Heart right ventricle (tissue), 16 donors: ENCODE measurements at regions of chr11 and their contacts with region 1.

Region 1: GRCh38 chr11:63871962-63872799 is 33.3 kb downstream of the MARK2 start:
- DNase-seq: peak; percentile 55 to 89
- ATAC-seq: peak; percentile 92 to 97 (median 96)
- H3K4me3 ChIP-seq: peak overlapping the region in 4 of 10 donors; percentile 5 to 27 (median 12)
- H3K27ac ChIP-seq: peak overlapping the region; percentile 25 to 90 (median 79)
- H3K4me1 ChIP-seq: peaks cover 35 to 97% (median 88%) of the 10 kb centered on the region in 9 donors
- H3K27me3 ChIP-seq: no peaks in the 10 kb centered on the region
- CTCF ChIP-seq: peak in 8 of 9 donors; percentile 30 to 78 (median 56)

Region 2: GRCh38 chr11:63762654-63763495 is 109.3 kb before region 1 on chr11:
- intact Hi-C with region 1: no loop called
- DNase-seq: peak; percentile 35 to 52
- ATAC-seq: peak; percentile 44 to 65 (median 58)
- H3K4me3 ChIP-seq: peak overlapping the region; percentile 26 to 67 (median 54)
- H3K27ac ChIP-seq: peak overlapping the region in 9 of 10 donors; percentile 50 to 74 (median 69)
- H3K4me1 ChIP-seq: peaks cover 10 to 48% (median 22%) of the 10 kb centered on the region in 9 donors
- H3K27me3 ChIP-seq: no peaks in the 10 kb centered on the region
- CTCF ChIP-seq: peak in 5 of 9 donors; percentile 7 to 47 (median 27)

Region 3: GRCh38 chr11:63938479-63939396 is 66.6 kb after region 1 on chr11 and contains the start of gene NAA40:
- intact Hi-C with region 1: loop called in 1 of 10 experiments (anchors 2 kb)
- DNase-seq: peak; percentile 86 to 91
- ATAC-seq: peak; percentile 93 to 96 (median 95)
- H3K4me3 ChIP-seq: peak within 1 kb of the TSS; percentile 53 to 92 (median 72)
- H3K27ac ChIP-seq: peak within 1 kb of the TSS; percentile 49 to 83 (median 75)
- H3K4me1 ChIP-seq: peaks cover 0 to 38% (median 23%) of the 10 kb centered on the region in 9 donors
- H3K27me3 ChIP-seq: no peaks in the 10 kb centered on the region
- CTCF ChIP-seq: peak in 5 of 9 donors; percentile 6 to 26 (median 12)
- total RNA-seq, gene NAA40: 13.0 to 26.4 (median 19.7) TPM

Region 4: DNA sequence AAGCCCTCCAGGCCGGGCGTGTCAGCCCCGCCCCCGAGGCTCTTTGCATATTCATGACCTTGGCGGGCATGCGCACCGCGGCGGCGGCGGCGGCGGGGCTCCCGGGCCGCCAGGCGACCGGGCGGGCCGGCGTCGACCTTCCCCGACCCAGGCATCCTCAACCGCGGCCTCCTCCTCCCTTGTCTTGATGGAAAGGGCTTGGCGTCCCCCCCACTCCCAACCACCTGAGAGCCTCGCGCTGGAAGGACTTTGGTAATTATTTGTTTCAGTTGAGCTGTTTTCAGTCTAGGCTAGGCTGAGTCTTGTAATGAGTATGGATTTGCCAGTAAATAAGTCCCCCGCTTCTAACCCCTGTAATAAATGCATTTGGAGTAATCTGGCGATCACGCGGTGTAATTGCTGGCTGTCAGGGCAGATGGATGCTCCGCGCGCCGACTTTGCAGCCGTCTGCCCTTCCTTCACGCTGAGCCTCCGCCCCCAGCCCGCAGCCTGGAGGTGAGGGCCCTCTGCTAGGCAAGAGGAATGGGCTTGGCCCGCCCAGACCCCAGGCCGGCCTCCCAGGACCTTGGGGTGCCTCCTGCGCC is 188.8 kb after region 1 on chr11:
- intact Hi-C with region 1: no loop called
- DNase-seq: peak; percentile 30 to 66
- ATAC-seq: peak in 2 of 8 donors; percentile 38 to 44
- H3K4me3 ChIP-seq: peak overlapping the region in 9 of 10 donors; percentile 22 to 48 (median 44)
- H3K27ac ChIP-seq: no peak overlapping the region
- H3K4me1 ChIP-seq: peaks cover 9 to 64% (median 29%) of the 10 kb centered on the region in 9 donors
- H3K27me3 ChIP-seq: peaks cover 0 to 32% (median 6%) of the 10 kb centered on the region in 7 donors
- CTCF ChIP-seq: no peak